ENCODE measurements at regions of chr5 and their contacts with region 1.

Region 1: GRCh38 chr5:88398316-88398715 is 129.7 kb upstream of the TMEM161B start:
- DNase-seq: no peak

Region 2: GRCh38 chr5:88480756-88481499 is 82.6 kb after region 1 on chr5:
- intact Hi-C with region 1: loop called (anchors 10 kb)
- DNase-seq: no peak

Region 3: DNA sequence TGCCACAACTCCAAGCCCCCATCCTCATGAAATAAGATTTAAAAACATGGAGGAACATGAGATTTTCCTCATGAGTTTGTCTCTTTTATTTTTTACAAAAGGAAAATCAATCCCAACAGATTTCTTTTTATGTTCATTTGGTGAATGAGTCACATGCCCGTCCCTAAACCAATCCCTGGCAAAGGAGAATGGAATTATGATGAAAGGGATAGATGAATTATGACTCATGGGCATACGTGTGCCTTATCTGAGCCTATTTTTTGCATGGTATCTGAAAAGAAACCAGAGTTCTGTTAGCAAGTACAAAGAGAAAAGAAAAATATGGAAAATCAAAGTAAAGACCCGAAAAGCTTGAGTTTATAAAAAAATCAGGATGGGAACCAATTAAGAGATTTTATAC is 137.8 kb after region 1 on chr5:
- intact Hi-C with region 1: no loop called
- DNase-seq: no peak

Region 4: GRCh38 chr5:88674356-88675167 is 276.2 kb after region 1 on chr5:
- intact Hi-C with region 1: loop called (anchors 5 kb)
- DNase-seq: peak; percentile 79 to 98 (median 86)

Region 5: GRCh38 chr5:89283728-89284493 is 885.6 kb after region 1 on chr5:
- intact Hi-C with region 1: no loop called
- DNase-seq: no peak

Measured in posterior cingulate gyrus (tissue), 11 donors.